Psoas muscle (tissue), 8 donors: ENCODE measurements at regions of chr5 and their contacts with region 1.

Region 1: DNA sequence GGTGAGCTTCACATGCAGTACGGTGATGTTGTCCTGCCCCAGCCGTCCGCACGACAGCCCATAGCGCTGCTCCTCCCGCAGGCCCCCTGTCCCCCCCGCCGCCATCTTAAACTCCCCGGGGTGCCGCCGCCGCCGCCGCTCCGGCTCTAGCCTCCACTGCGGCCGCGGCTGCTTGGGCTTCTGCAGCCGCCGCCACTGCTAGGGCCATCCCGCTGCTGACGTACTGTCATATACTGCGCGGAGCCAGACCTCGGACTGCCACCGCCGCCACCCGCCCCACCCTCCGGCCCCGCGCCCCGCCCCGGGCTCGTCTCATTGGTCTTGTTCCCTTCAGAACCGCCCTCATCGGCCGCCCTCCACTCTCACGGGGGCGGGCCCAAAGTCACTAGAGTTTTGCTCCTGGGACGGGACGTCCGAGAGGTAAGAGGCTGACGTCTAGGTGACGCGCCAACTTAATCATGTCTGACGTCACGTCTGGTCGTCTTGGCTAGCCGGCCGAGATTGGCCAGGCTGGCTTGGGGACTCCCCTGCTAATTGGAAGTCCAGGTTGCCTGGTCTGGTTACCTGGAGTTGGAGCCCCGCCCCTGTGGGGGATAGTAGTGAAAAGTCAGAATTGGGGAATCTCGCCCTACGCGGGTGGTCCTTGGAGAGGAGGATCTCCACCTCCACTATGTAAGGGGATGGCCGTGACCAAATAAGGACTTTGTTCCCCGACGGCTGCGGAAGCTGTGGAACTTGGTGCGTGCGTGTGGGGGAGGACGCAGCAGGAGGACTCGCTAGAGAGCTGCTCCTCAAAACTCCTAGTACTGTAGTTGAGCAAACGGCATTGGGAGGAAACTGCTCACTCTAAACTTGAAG is at the start of gene ELL2:
- DNase-seq: peak; percentile 98 to 99
- ATAC-seq: peak; percentile 87 to 90 (median 89)
- H3K4me3 ChIP-seq: peak within 1 kb of the TSS; percentile 94
- H3K27ac ChIP-seq: peak within 1 kb of the TSS; percentile 95
- H3K4me1 ChIP-seq: peaks cover 18% of the 10 kb centered on the region
- H3K27me3 ChIP-seq: no peaks in the 10 kb centered on the region
- CTCF ChIP-seq: no peak
- total RNA-seq, gene ELL2: 16.2 to 59.8 (median 32.1) TPM

Region 2: GRCh38 chr5:95915999-95916686 is 45.7 kb before region 1 on chr5:
- intact Hi-C with region 1: loop called in 1 of 2 experiments (anchors 5 kb)
- DNase-seq: no peak
- ATAC-seq: no peak
- H3K4me3 ChIP-seq: no peak overlapping the region
- H3K27ac ChIP-seq: no peak overlapping the region
- H3K4me1 ChIP-seq: peaks cover 19% of the 10 kb centered on the region
- H3K27me3 ChIP-seq: no peaks in the 10 kb centered on the region
- CTCF ChIP-seq: no peak

Region 3: GRCh38 chr5:96079075-96079474 is 117.2 kb after region 1 on chr5:
- intact Hi-C with region 1: loop called in 1 of 2 experiments (anchors 10 kb)
- DNase-seq: no peak
- ATAC-seq: peak; percentile 89 to 94 (median 92)
- H3K4me3 ChIP-seq: no peak overlapping the region
- H3K27ac ChIP-seq: peak overlapping the region; percentile 57
- H3K4me1 ChIP-seq: peaks cover 22% of the 10 kb centered on the region
- H3K27me3 ChIP-seq: no peaks in the 10 kb centered on the region
- CTCF ChIP-seq: no peak

Region 4: DNA sequence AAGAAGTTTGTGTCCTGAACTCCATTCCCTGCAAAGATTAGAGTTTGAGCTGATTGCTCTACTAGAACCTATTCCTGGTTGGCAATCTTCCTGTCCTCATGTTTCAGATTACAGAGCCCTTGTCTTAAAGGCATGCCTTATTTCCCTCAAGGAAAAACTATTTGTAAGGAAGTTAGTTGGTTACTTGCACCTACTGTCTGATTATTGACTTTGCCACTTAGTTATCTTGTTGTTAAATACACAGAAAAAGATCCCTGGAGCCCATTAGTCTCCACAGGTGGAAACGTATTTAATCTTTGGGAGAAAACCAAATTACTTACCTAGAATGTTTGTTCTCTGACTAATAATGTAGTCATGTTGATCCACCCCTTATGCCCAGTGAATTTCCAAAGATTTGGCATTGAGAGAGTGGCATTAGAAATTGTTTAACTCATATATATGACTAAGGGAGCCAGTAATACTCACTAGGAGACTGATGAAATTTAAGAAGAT is 132.1 kb after region 1 on chr5:
- intact Hi-C with region 1: no loop called
- DNase-seq: no peak
- ATAC-seq: no peak
- H3K4me3 ChIP-seq: no peak overlapping the region
- H3K27ac ChIP-seq: no peak overlapping the region
- H3K4me1 ChIP-seq: peaks cover 12% of the 10 kb centered on the region
- H3K27me3 ChIP-seq: no peaks in the 10 kb centered on the region
- CTCF ChIP-seq: no peak

Region 5: DNA sequence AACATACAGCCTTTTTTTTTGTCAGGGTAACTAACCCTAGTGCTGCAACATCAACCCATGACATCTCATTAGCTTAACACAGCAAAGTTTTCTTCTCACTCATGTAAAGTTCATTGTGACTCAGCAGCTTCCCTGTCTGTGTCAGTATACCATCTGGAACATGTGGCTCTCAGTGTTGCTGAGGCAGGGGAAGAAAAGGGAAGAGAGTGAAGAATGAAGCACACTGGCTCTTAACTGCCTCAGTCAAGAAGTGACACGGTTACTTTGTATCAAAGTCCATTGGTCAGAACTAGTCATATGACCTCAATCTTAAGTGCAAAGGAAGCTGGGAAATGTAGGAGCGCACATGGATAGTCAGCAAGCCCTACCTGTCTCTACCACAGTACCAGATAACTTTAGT is 184.8 kb after region 1 on chr5:
- intact Hi-C with region 1: no loop called
- DNase-seq: no peak
- ATAC-seq: peak in 1 of 4 donors; percentile 30
- H3K4me3 ChIP-seq: no peak overlapping the region
- H3K27ac ChIP-seq: no peak overlapping the region
- H3K4me1 ChIP-seq: no peaks in the 10 kb centered on the region
- H3K27me3 ChIP-seq: no peaks in the 10 kb centered on the region
- CTCF ChIP-seq: no peak

Region 6: DNA sequence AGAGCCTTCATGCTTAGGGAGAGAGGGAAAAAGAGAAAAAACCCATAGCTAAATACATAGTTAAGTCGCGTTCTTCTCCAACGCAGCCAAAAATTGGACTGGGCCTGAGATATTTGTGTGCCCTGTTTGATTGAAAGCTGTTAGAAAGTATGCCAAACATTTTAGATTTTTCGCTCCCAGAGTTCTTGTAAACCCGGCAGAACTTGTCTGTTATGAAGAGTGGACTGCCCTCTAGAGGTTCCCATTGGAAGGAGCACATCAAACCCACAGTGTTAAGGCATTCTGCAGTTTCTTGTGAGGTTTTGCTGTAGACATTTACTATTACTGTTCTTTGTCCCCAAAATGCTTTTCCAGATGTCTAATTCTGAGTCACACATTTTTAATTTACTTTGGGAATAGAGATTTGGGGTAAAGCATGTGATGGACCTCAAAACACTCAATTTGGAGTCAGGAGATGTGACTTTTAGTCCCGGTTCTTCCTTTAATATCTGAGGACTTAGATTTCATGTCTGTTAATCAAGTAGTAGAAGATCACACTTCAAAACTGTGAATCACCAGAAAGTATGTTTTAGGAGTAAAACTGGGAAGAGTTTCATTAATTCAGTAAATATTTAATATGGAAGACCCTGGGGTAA is 374.6 kb after region 1 on chr5:
- intact Hi-C with region 1: loop called (anchors 1 to 5 kb)
- DNase-seq: peak in 1 of 2 donors; percentile 21
- ATAC-seq: peak; percentile 73 to 79 (median 76)
- H3K4me3 ChIP-seq: peak overlapping the region; percentile 35
- H3K27ac ChIP-seq: peak overlapping the region; percentile 85
- H3K4me1 ChIP-seq: peaks cover 40% of the 10 kb centered on the region
- H3K27me3 ChIP-seq: no peaks in the 10 kb centered on the region
- CTCF ChIP-seq: peak; percentile 92